CD4-positive, alpha-beta memory T cell (primary cell): ENCODE measurements at regions of chr18 and their contacts with region 1.

Region 1: GRCh38 chr18:26383454-26384270 is 157.4 kb downstream of the TAF4B start:
- DNase-seq: peak in 4 of 5 donors; percentile 14 to 27 (median 21)
- H3K4me3 ChIP-seq: no peak overlapping the region
- H3K4me3 Mint-ChIP-seq: no peak overlapping the region
- H3K27ac ChIP-seq: no peak overlapping the region
- H3K27ac Mint-ChIP-seq: no peak overlapping the region
- H3K4me1 ChIP-seq: no peaks in the 10 kb centered on the region
- H3K4me1 Mint-ChIP-seq: no peaks in the 10 kb centered on the region
- H3K27me3 ChIP-seq: no peaks in the 10 kb centered on the region
- H3K27me3 Mint-ChIP-seq: no peaks in the 10 kb centered on the region

Region 2: GRCh38 chr18:26370037-26370436 is 13.6 kb before region 1 on chr18:
- CTCF ChIA-PET with region 1: interaction called, 22 read pairs
- POLR2A ChIA-PET with region 1: no interaction called
- intact Hi-C with region 1: no loop called
- DNase-seq: no peak
- H3K4me3 ChIP-seq: no peak overlapping the region
- H3K4me3 Mint-ChIP-seq: no peak overlapping the region
- H3K27ac ChIP-seq: no peak overlapping the region
- H3K27ac Mint-ChIP-seq: no peak overlapping the region
- H3K4me1 ChIP-seq: no peaks in the 10 kb centered on the region
- H3K4me1 Mint-ChIP-seq: no peaks in the 10 kb centered on the region
- H3K27me3 ChIP-seq: no peaks in the 10 kb centered on the region
- H3K27me3 Mint-ChIP-seq: no peaks in the 10 kb centered on the region